ENCODE measurements at regions of chr1 and their contacts with region 1.

Region 1: GRCh38 chr1:150235852-150236613 is at the start of gene ANP32E:
- DNase-seq: peak; percentile 98
- ATAC-seq: peak; percentile 89
- H3K4me3 ChIP-seq: peak within 1 kb of the TSS; percentile 83 to 98 (median 86)
- H3K4me3 Mint-ChIP-seq: no peak within 1 kb of the TSS
- H3K27ac ChIP-seq: peak within 1 kb of the TSS; percentile 97 to 98
- H3K27ac Mint-ChIP-seq: no peak within 1 kb of the TSS
- H3K4me1 ChIP-seq: peaks cover 23% of the 10 kb centered on the region in 2 donors
- H3K4me1 Mint-ChIP-seq: peaks cover 16% of the 10 kb centered on the region
- H3K27me3 ChIP-seq: no peaks in the 10 kb centered on the region
- H3K27me3 Mint-ChIP-seq: no peaks in the 10 kb centered on the region
- CTCF ChIP-seq: no peak
- total RNA-seq, gene ANP32E: 42.4 and 47.1 TPM in 2 replicates

Region 2: DNA sequence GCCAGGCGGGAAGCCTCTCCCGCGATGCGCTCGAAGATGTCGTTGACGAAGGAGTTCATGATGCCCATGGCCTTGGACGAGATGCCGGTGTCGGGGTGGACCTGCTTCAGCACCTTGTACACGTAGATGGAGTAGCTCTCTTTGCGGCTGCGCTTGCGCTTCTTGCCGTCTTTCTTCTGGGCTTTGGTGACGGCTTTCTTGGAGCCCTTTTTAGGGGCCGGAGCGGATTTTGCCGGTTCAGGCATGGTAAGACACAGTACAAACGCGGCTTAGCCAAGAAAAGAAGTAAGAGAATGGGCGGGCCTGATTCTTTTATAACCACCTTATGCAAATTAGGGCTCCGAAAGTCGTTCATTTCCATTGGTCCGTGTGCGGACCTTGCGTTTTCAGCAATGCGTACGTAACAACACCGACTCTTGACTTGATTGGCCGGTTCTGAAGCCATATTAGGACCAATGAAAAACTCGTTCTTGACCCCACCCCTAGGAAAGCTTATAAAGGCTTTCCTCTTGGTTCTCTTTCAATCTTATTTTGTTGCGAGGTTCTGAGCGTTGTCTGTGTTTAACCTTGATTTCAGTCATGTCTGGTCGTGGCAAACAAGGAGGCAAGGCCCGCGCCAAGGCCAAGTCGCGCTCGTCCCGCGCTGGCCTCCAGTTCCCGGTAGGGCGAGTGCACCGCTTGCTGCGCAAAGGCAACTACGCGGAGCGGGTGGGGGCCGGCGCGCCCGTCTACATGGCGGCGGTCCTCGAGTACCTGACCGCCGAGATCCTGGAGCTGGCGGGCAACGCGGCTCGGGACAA is 349.4 kb before region 1 on chr1:
- CTCF ChIA-PET with region 1: no interaction called
- POLR2A ChIA-PET with region 1: no interaction called
- intact Hi-C with region 1: loop called (anchors 1 kb)
- DNase-seq: peak; percentile 98
- ATAC-seq: peak; percentile 73
- H3K4me3 ChIP-seq: peak overlapping the region; percentile 84 to 97 (median 92)
- H3K4me3 Mint-ChIP-seq: no peak overlapping the region
- H3K27ac ChIP-seq: peak overlapping the region; percentile 89 to 94
- H3K27ac Mint-ChIP-seq: no peak overlapping the region
- H3K4me1 ChIP-seq: peaks cover 23 to 33% of the 10 kb centered on the region in 2 donors
- H3K4me1 Mint-ChIP-seq: peaks cover 11% of the 10 kb centered on the region
- H3K27me3 ChIP-seq: no peaks in the 10 kb centered on the region
- H3K27me3 Mint-ChIP-seq: no peaks in the 10 kb centered on the region
- CTCF ChIP-seq: no peak

Region 3: GRCh38 chr1:150213170-150214098 is 22.6 kb before region 1 on chr1:
- CTCF ChIA-PET with region 1: interaction called, 10 read pairs
- POLR2A ChIA-PET with region 1: interaction called, 19 read pairs
- intact Hi-C with region 1: loop called (anchors 1 kb)
- DNase-seq: peak; percentile 94
- ATAC-seq: peak; percentile 99
- H3K4me3 ChIP-seq: peak overlapping the region; percentile 51 to 89 (median 70)
- H3K4me3 Mint-ChIP-seq: peak overlapping the region; percentile 93
- H3K27ac ChIP-seq: peak overlapping the region; percentile 73 to 74
- H3K27ac Mint-ChIP-seq: peak overlapping the region; percentile 95
- H3K4me1 ChIP-seq: peaks cover 6 to 13% of the 10 kb centered on the region in 2 donors
- H3K4me1 Mint-ChIP-seq: peaks cover 16% of the 10 kb centered on the region
- H3K27me3 ChIP-seq: no peaks in the 10 kb centered on the region
- H3K27me3 Mint-ChIP-seq: no peaks in the 10 kb centered on the region
- CTCF ChIP-seq: peak; percentile 60

Region 4: DNA sequence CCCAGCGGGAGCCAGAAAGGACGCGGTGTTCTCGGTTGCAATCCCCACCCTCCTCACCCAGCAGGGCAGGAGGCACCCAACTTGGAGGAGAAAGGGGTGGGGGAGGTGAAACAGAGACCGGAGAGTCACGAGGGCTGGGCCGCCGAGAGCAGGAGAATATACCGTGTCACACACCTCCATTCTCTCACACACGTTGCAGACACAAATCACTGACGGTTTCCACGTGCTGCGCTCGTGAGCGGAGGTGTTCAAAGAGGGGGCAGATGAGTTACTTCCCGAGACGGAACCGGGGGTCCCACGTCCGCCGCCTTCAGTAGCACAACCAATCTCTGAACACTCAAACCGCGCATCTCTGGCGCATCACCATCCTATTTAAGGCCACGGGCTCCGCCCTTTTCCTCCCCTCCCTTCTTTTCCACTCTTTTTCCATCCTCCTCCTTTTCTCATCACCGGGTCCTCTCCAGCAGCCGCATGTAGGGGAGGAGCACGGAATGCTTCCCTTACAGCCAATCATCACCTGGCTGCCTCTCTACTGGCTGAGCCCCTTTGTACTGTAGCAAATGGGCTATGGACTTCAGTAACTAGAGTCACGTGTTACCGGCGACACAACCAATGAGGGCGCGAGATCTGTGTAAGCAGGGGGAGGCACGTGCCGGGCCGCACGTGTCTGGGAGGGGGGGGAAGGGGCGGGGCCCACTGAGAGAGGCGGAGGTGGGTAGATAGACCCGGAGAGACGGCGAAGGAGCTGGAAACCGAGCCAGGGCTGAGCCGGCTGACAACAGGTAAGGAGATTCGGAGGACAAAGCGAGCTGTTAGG is 46.0 kb after region 1 on chr1 and contains the start of gene CIART:
- CTCF ChIA-PET with region 1: no interaction called
- POLR2A ChIA-PET with region 1: no interaction called
- intact Hi-C with region 1: loop called (anchors 5 kb)
- DNase-seq: peak; percentile 88
- ATAC-seq: peak; percentile 86
- H3K4me3 ChIP-seq: peak within 1 kb of the TSS; percentile 30 to 74 (median 59)
- H3K4me3 Mint-ChIP-seq: peak within 1 kb of the TSS; percentile 91
- H3K27ac ChIP-seq: no peak within 1 kb of the TSS
- H3K27ac Mint-ChIP-seq: peak within 1 kb of the TSS; percentile 73
- H3K4me1 ChIP-seq: peaks cover 20 to 23% of the 10 kb centered on the region in 2 donors
- H3K4me1 Mint-ChIP-seq: peaks cover 18% of the 10 kb centered on the region
- H3K27me3 ChIP-seq: peaks cover 0 to 12% (median 6%) of the 10 kb centered on the region in 4 experiments
- H3K27me3 Mint-ChIP-seq: peaks cover 4% of the 10 kb centered on the region
- CTCF ChIP-seq: no peak
- total RNA-seq, gene CIART: 0.27 TPM in 1 of 2 replicates, not detected in the other

Region 5: DNA sequence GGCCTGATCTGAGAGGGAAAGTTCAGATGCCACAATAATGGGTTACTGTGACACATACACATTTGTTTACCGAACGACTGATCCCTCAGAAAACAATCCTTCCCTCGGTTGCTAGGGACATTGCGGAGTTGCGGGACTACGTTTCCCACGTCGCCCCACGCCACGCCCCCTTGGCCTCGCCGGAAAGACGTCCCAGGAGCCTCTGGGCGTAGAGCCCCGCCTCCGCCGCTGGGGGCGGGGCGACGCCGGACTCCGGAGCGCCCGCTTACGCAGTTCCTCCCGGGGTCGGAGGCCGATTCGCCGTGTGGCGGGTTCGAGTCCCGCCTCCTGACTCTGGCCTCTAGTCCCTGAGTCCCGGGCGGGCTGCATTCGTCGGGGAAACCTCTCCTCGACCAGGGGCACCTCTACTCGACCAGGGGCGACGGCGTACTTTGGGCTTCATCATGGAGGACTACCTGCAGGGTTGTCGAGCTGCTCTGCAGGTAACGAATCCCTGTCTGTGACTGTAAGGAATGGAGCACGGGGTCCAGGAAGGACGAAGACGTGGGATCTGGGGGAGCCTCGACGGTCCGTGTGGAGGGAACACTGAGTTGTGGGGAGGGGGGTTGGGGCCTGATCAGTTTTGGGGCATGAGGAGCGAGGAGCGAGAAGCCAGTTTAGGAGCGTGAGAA is 772.3 kb after region 1 on chr1 and contains the start of gene PRUNE1:
- CTCF ChIA-PET with region 1: no interaction called
- POLR2A ChIA-PET with region 1: no interaction called
- intact Hi-C with region 1: loop called (anchors 1 kb)
- DNase-seq: peak; percentile 98
- ATAC-seq: peak; percentile 97
- H3K4me3 ChIP-seq: peak within 1 kb of the TSS; percentile 74 to 98 (median 85)
- H3K4me3 Mint-ChIP-seq: peak within 1 kb of the TSS; percentile 90
- H3K27ac ChIP-seq: peak within 1 kb of the TSS; percentile 82 to 95
- H3K27ac Mint-ChIP-seq: peak within 1 kb of the TSS; percentile 94
- H3K4me1 ChIP-seq: peaks cover 39 to 55% of the 10 kb centered on the region in 2 donors
- H3K4me1 Mint-ChIP-seq: peaks cover 66% of the 10 kb centered on the region
- H3K27me3 ChIP-seq: no peaks in the 10 kb centered on the region
- H3K27me3 Mint-ChIP-seq: no peaks in the 10 kb centered on the region
- CTCF ChIP-seq: no peak
- total RNA-seq, gene PRUNE1: 20.8 and 21.3 TPM in 2 replicates